ENCODE measurements at regions of chr15 and their contacts with region 1.

Region 1: DNA sequence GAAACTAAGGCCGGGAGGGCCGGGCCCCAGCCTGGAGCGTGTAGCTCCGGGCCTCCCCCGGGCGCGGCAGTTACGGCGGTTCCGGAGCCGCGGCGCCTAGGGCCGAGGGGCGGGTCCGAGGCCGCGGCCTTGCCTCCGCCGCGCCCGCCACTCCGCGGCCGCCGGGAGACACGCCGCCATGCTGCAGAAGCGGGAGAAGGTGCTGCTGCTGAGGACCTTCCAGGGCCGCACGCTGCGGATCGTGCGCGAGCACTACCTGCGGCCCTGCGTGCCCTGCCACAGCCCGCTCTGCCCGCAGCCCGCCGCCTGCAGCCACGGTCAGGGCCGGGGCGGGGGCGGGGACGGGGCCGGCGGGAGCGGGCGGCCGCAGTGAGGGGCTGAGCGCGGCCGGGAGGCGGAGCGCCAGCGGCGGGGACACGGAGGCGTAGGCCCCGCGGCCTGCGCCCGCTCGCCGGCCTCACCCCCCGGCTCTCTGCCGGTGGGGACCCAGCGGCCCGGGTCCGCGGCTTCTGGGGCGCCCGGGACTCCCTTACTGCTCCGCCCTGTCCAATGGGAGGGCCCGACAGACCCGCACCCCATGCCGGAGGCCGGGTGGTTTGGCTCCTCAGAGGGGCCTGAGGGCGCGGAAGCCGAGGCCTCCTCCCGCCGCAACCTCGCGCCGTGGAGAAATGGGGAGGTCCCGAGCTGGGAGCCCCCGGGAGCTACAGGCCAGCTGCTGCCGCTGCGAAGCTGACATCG is at the start of gene DIS3L:
- DNase-seq: peak; percentile 69
- H3K4me3 Mint-ChIP-seq: peak within 1 kb of the TSS; percentile 89
- H3K27ac Mint-ChIP-seq: peak within 1 kb of the TSS; percentile 94
- H3K4me1 Mint-ChIP-seq: peaks cover 35% of the 10 kb centered on the region
- H3K27me3 Mint-ChIP-seq: no peaks in the 10 kb centered on the region
- total RNA-seq, gene DIS3L: 47.7 and 56.0 TPM in 2 replicates

Region 2: DNA sequence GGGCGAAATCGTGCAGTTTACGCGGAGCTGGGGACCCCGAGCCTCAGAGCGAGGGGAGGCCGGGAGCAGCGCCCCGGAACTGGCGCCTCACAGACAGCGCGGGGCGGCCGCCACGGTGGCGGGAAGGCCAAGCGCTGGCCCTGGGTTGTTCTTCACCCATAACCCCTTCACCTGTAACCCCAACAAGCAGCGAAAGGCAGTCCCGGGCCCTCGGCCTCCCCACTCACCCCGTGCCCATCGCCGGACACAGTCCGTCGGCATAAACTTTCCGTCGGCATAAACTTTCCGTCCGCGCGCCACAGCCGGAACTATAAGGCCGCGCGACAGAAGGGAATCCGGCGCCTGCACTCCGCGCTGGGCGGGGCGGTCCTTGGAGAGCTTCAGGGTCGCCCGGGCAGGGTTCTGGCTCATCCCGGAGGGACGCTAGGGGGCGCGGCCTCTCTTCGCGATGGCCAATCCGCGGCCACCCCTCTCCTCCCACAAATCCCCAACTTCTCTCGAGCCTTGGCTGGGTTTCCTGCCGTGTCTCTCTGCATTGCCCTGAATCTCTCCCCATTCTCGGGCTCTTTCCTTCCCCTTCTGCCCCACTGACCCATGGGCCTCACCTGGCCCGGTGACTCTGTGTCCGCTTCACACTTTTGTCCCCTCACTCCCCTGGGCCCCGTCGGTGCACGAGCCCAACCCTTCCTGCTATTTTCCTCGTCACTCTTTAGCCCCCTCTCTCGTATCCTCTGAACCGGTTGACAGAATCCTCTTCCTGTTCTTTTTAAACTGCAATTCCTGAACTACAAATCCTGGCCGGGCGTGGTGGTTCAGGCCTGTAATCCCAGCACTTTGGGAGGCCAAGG is 682.5 kb before region 1 on chr15 and contains the start of gene INTS14:
- intact Hi-C with region 1: loop called (anchors 2 kb)
- DNase-seq: peak; percentile 89
- H3K4me3 Mint-ChIP-seq: peak within 1 kb of the TSS; percentile 90
- H3K27ac Mint-ChIP-seq: peak within 1 kb of the TSS; percentile 96
- H3K4me1 Mint-ChIP-seq: peaks cover 36% of the 10 kb centered on the region
- H3K27me3 Mint-ChIP-seq: no peaks in the 10 kb centered on the region
- total RNA-seq, gene INTS14: 47.4 and 53.3 TPM in 2 replicates

Region 3: DNA sequence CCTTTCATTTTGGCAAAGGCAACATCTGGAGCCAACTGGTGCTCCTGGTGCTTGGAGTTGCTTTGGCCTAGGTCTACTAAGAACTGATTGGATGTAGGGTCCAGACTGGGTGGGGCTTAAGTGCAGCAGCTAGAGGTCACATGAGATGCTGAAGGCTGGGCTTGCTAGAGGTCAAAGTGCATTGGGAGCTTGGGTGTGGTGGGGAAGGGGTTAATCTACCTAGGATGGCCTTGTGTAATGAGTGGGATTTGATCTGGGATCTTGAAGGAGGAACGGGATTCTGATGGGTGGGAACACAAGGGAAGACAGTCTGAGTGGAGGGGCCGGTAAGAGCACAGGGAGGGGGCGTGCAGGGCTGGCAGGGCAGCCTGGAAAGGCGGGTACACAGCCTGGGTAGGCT is 298.8 kb before region 1 on chr15:
- intact Hi-C with region 1: no loop called
- DNase-seq: no peak
- H3K4me3 Mint-ChIP-seq: no peak overlapping the region
- H3K27ac Mint-ChIP-seq: no peak overlapping the region
- H3K4me1 Mint-ChIP-seq: no peaks in the 10 kb centered on the region
- H3K27me3 Mint-ChIP-seq: peaks cover 16% of the 10 kb centered on the region

Region 4: GRCh38 chr15:66251790-66252684 is 41.6 kb before region 1 on chr15:
- intact Hi-C with region 1: loop called (anchors 2 kb)
- DNase-seq: peak; percentile 10
- H3K4me3 Mint-ChIP-seq: peak overlapping the region; percentile 71
- H3K27ac Mint-ChIP-seq: no peak overlapping the region
- H3K4me1 Mint-ChIP-seq: peaks cover 15% of the 10 kb centered on the region
- H3K27me3 Mint-ChIP-seq: peaks cover 80% of the 10 kb centered on the region

Region 5: GRCh38 chr15:66386204-66387123 is 92.9 kb after region 1 on chr15 and contains the start of gene MAP2K1:
- intact Hi-C with region 1: loop called (anchors 5 kb)
- DNase-seq: peak; percentile 98
- H3K4me3 Mint-ChIP-seq: peak within 1 kb of the TSS; percentile 99
- H3K27ac Mint-ChIP-seq: peak within 1 kb of the TSS; percentile 99
- H3K4me1 Mint-ChIP-seq: peaks cover 52% of the 10 kb centered on the region
- H3K27me3 Mint-ChIP-seq: no peaks in the 10 kb centered on the region
- total RNA-seq, gene MAP2K1: 82.5 and 86.6 TPM in 2 replicates

Region 6: GRCh38 chr15:66459818-66460615 is 166.4 kb after region 1 on chr15:
- intact Hi-C with region 1: no loop called
- DNase-seq: no peak
- H3K4me3 Mint-ChIP-seq: no peak overlapping the region
- H3K27ac Mint-ChIP-seq: peak overlapping the region; percentile 16
- H3K4me1 Mint-ChIP-seq: peaks cover 11% of the 10 kb centered on the region
- H3K27me3 Mint-ChIP-seq: no peaks in the 10 kb centered on the region

Region 7: GRCh38 chr15:66504563-66505429 is 211.2 kb after region 1 on chr15 and contains the starts of genes RPL4 and ZWILCH:
- intact Hi-C with region 1: loop called (anchors 2 kb)
- DNase-seq: peak; percentile 77
- H3K4me3 Mint-ChIP-seq: peak within 1 kb of the TSS; percentile 99
- H3K27ac Mint-ChIP-seq: peak within 1 kb of the TSS; percentile 99
- H3K4me1 Mint-ChIP-seq: peaks cover 55% of the 10 kb centered on the region
- H3K27me3 Mint-ChIP-seq: no peaks in the 10 kb centered on the region
- total RNA-seq, gene RPL4: 3,069 and 3,091 TPM in 2 replicates
- total RNA-seq, gene ZWILCH: 37.5 and 42.2 TPM in 2 replicates

Measured in activated T-helper 1 cell treated with anti-CD3 and anti-CD28 coated beads, Interleukin-12 subunit alpha, Interleukin-12 subunit beta, Interleukin-2, Interleukin-4 antibody, amounts not matched to agents 30 ng/mL and 10 ng/mL and 1 ng/mL, durations not matched to agents 14 hours and 24 hours and 36 hours (primary cell).